Ovary (tissue), 10 donors: ENCODE measurements at regions of chr7 and their contacts with region 1.

Region 1: DNA sequence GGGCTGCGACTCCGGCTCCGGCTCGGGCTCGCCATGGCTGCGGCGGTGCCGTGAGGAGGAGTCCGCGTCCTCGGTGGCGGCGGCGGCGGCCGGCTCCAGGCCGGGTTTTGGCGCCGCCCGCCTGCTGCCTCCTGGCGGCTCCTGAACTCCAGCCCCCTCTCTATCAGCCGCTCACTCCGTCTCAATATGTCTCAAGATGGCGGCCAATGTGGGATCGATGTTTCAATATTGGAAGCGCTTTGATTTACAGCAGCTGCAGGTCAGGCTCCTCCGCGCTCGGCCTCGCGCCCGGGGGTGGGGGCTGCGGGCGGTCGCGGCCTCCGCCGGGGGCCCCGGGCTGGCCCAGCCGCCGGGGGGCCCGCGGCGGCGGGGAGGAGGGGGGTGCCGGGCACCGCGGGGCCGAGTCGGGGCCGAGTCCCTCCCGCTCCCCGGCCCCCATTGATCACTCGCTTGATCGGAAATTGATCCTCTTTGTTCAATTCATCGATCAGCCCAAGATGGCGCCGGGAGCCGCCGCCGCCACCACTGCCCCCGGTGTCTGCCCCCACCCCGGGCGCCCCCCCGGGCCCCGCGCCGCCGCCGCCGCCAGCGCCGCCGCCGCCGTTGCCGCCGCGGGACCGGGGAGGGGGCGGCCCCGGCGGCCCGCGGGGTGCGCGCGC is 1.5 kb upstream of the CUX1 start:
- DNase-seq: peak; percentile 68 to 82 (median 73)
- H3K4me3 ChIP-seq: peak overlapping the region; percentile 47
- H3K27ac ChIP-seq: peak overlapping the region; percentile 72 to 76
- H3K4me1 ChIP-seq: peaks cover 3% of the 10 kb centered on the region
- H3K27me3 ChIP-seq: no peaks in the 10 kb centered on the region
- CTCF ChIP-seq: no peak
- EP300 ChIP-seq: no peak
- POLR2A ChIP-seq: peak; percentile 26

Region 2: GRCh38 chr7:101602484-101603241 is 213.3 kb before region 1 on chr7:
- intact Hi-C with region 1: loop called in 1 of 4 experiments (anchors 10 kb)
- DNase-seq: peak; percentile 57 to 83 (median 72)
- H3K4me3 ChIP-seq: no peak overlapping the region
- H3K27ac ChIP-seq: no peak overlapping the region
- H3K4me1 ChIP-seq: no peaks in the 10 kb centered on the region
- H3K27me3 ChIP-seq: no peaks in the 10 kb centered on the region
- CTCF ChIP-seq: peak; percentile 48 to 56 (median 53)
- EP300 ChIP-seq: no peak
- POLR2A ChIP-seq: no peak

Region 3: GRCh38 chr7:101702362-101702850 is 113.6 kb before region 1 on chr7:
- intact Hi-C with region 1: loop called in 1 of 4 experiments (anchors 5 kb)
- DNase-seq: no peak
- H3K4me3 ChIP-seq: no peak overlapping the region
- H3K27ac ChIP-seq: no peak overlapping the region
- H3K4me1 ChIP-seq: no peaks in the 10 kb centered on the region
- H3K27me3 ChIP-seq: no peaks in the 10 kb centered on the region
- CTCF ChIP-seq: no peak
- EP300 ChIP-seq: no peak
- POLR2A ChIP-seq: no peak

Region 4: GRCh38 chr7:101911800-101912715 is 96.1 kb after region 1 on chr7:
- intact Hi-C with region 1: loop called in 1 of 4 experiments (anchors 5 kb)
- DNase-seq: peak; percentile 71 to 87 (median 82)
- H3K4me3 ChIP-seq: no peak overlapping the region
- H3K27ac ChIP-seq: peak overlapping the region; percentile 69 to 99
- H3K4me1 ChIP-seq: peaks cover 29% of the 10 kb centered on the region
- H3K27me3 ChIP-seq: no peaks in the 10 kb centered on the region
- CTCF ChIP-seq: peak; percentile 17 to 53 (median 35)
- EP300 ChIP-seq: peak; percentile 66
- POLR2A ChIP-seq: peak; percentile 13

Region 5: DNA sequence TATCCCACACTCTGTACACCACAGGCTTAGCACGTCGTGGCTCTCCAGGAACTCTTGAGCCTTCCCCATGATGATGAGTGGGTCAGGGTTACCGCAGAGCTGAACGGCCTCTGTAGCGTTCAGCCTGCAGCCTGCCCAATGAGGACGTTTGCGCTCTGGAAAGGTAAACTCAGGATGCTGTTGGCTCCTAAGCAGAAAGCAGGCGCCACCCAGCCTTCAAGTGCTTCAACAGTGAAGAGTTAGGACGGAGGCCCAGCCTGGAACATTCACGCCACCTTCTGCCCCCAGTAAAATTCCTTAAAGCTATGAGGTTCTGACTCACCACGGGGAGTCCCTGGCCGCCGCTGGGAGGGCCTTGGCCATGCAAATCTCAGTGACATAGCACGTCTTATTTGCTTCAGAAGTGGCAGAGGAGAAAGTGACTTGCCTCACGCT is 309.2 kb after region 1 on chr7:
- intact Hi-C with region 1: loop called in 1 of 4 experiments (anchors 10 kb)
- DNase-seq: peak in 4 of 5 donors; percentile 49 to 63 (median 56)
- H3K4me3 ChIP-seq: no peak overlapping the region
- H3K27ac ChIP-seq: no peak overlapping the region
- H3K4me1 ChIP-seq: peaks cover 14% of the 10 kb centered on the region
- H3K27me3 ChIP-seq: no peaks in the 10 kb centered on the region
- CTCF ChIP-seq: no peak
- EP300 ChIP-seq: no peak
- POLR2A ChIP-seq: no peak

Region 6: GRCh38 chr7:102236592-102237287 is 420.8 kb after region 1 on chr7:
- intact Hi-C with region 1: loop called in 3 of 4 experiments (anchors 5 to 10 kb)
- DNase-seq: peak; percentile 58 to 78 (median 73)
- H3K4me3 ChIP-seq: no peak overlapping the region
- H3K27ac ChIP-seq: peak overlapping the region in 1 of 2 donors; percentile 25
- H3K4me1 ChIP-seq: no peaks in the 10 kb centered on the region
- H3K27me3 ChIP-seq: no peaks in the 10 kb centered on the region
- CTCF ChIP-seq: peak; percentile 76 to 81 (median 77)
- EP300 ChIP-seq: no peak
- POLR2A ChIP-seq: no peak